ENCODE measurements at regions of chr4 and their contacts with region 1.

Region 1: GRCh38 chr4:185640811-185641675 is 105.7 kb upstream of the PDLIM3 start:
- DNase-seq: peak; percentile 80
- H3K4me3 ChIP-seq: no peak overlapping the region
- CTCF ChIP-seq: peak; percentile 12

Region 2: DNA sequence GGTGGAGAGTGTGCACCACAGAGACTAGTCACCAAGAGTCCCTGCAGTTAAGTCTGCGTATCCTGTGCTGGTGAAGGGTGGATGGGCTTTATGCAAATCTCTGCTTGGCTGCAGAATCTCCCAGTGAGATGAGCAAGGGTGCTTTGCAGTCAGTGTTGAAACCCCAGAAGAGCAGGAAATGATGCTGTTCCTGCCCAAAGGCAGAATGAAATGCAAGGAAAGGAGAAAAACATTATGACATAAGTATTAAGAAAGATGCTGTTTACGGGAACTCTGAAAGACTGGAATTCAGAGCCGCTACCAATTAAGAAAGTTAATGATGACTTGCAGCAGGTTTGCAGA is 789.9 kb before region 1 on chr4:
- in situ Hi-C with region 1: no loop called
- DNase-seq: no peak
- H3K4me3 ChIP-seq: no peak overlapping the region
- CTCF ChIP-seq: no peak

Region 3: GRCh38 chr4:185597532-185598188 is 43.4 kb before region 1 on chr4:
- in situ Hi-C with region 1: no loop called
- DNase-seq: peak; percentile 70
- H3K4me3 ChIP-seq: no peak overlapping the region
- CTCF ChIP-seq: peak; percentile 100

Region 4: DNA sequence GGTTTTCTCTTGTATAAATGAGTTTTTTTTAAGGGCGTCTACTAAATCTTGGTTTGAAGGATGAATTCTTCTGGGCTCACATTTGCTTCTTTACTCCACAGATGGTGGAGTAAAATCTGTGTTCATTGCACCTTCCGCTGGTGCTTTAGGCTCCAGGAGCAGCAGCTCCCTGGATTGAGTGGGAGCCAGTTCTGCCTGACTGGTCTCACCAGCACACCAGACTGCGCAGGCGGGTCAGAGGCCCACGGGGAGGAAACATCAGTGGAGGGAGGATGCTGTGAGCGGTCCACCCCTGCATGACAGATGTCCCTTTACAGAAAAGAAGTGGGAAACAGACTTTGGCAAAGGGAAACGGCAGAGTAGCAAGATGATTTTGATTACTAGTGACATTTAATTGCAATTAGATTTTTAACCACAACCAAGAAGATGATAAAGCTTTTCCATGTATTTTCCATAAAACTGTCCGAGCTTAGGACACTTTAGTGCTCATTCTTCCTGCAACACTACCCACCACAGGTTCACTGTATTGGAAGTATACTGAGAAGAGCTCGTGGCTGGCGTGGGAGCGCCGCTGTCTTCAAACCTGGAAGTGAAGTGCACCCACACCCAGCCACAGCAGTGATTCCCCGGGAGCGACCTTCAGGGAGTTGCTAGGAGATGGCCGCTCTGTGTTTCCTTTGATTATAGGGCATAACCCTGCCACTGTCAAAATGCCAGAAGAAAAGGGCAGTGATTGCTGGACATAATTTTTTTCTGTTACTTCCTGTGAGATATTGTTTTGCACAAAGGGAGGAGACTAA is 75.7 kb after region 1 on chr4:
- in situ Hi-C with region 1: no loop called
- DNase-seq: no peak
- H3K4me3 ChIP-seq: no peak overlapping the region
- CTCF ChIP-seq: no peak

Region 5: DNA sequence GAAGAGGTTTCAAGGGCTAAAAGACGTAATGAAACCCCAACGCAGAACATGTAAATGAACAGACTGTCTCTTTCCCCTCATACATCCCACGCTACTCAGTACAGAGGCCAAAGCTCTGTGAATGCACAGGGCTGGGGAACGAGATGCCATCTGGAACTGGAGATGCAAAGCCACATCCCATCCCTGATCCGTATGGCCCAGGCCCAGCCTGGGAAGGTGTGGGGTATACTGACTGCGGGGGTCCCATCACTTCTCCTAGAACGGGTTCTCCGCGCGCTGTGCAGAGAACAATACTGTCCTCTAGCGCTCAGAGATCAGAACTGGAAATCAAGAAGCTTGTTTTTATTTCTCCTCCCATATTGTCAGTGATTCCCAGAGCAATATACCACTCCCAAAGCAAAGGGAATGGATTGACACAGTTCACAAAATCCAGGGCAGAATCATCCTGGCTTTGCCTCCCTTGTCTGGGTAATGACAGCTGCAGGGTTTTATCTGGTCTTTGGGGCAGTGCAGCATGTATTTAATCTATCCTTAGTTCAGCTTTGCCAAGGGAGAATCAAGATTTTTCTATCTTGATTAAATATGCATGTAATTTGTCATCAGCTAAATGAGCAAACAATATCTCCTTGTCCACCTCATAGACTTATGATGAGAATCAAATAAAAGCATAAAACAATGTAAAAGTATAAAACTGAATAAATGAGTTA is 380.6 kb after region 1 on chr4:
- in situ Hi-C with region 1: loop called (anchors 10 kb)
- DNase-seq: peak; percentile 51
- H3K4me3 ChIP-seq: no peak overlapping the region
- CTCF ChIP-seq: peak; percentile 98

Measured in astrocyte of the cerebellum (primary cell).